T-cell (primary cell): ENCODE measurements at regions of chr1 and their contacts with region 1.

Region 1: GRCh38 chr1:29043274-29043965 is 80.3 kb downstream of the TMEM200B start:
- DNase-seq: no peak
- ATAC-seq: no peak
- H3K4me3 ChIP-seq: no peak overlapping the region
- H3K4me3 Mint-ChIP-seq: no peak overlapping the region
- H3K27ac ChIP-seq: no peak overlapping the region
- H3K27ac Mint-ChIP-seq: no peak overlapping the region
- H3K4me1 ChIP-seq: no peaks in the 10 kb centered on the region
- H3K4me1 Mint-ChIP-seq: no peaks in the 10 kb centered on the region
- H3K27me3 ChIP-seq: no peaks in the 10 kb centered on the region
- H3K27me3 Mint-ChIP-seq: no peaks in the 10 kb centered on the region

Region 2: GRCh38 chr1:28976248-28976647 is 67.2 kb before region 1 on chr1:
- CTCF ChIA-PET with region 1: no interaction called
- POLR2A ChIA-PET with region 1: no interaction called
- DNase-seq: no peak
- ATAC-seq: no peak
- H3K4me3 ChIP-seq: no peak overlapping the region
- H3K4me3 Mint-ChIP-seq: no peak overlapping the region
- H3K27ac ChIP-seq: no peak overlapping the region
- H3K27ac Mint-ChIP-seq: no peak overlapping the region
- H3K4me1 ChIP-seq: peaks cover 8 to 12% of the 10 kb centered on the region in 2 experiments
- H3K4me1 Mint-ChIP-seq: peaks cover 87 to 90% (median 87%) of the 10 kb centered on the region in 3 donors
- H3K27me3 ChIP-seq: no peaks in the 10 kb centered on the region
- H3K27me3 Mint-ChIP-seq: no peaks in the 10 kb centered on the region

Region 3: GRCh38 chr1:29062157-29062942 is 18.9 kb after region 1 on chr1:
- CTCF ChIA-PET with region 1: no interaction called
- POLR2A ChIA-PET with region 1: no interaction called
- DNase-seq: no peak
- ATAC-seq: no peak
- H3K4me3 ChIP-seq: no peak overlapping the region
- H3K4me3 Mint-ChIP-seq: no peak overlapping the region
- H3K27ac ChIP-seq: no peak overlapping the region
- H3K27ac Mint-ChIP-seq: peak overlapping the region; percentile 44 to 55
- H3K4me1 ChIP-seq: peaks cover 2% of the 10 kb centered on the region in 2 experiments
- H3K4me1 Mint-ChIP-seq: peaks cover 7 to 14% (median 11%) of the 10 kb centered on the region in 3 donors
- H3K27me3 ChIP-seq: no peaks in the 10 kb centered on the region
- H3K27me3 Mint-ChIP-seq: no peaks in the 10 kb centered on the region

Region 4: GRCh38 chr1:29190718-29191117 is 147.3 kb after region 1 on chr1:
- CTCF ChIA-PET with region 1: no interaction called
- POLR2A ChIA-PET with region 1: interaction called in 1 of 2 experiments, 10 read pairs
- DNase-seq: no peak
- ATAC-seq: no peak
- H3K4me3 ChIP-seq: no peak overlapping the region
- H3K4me3 Mint-ChIP-seq: no peak overlapping the region
- H3K27ac ChIP-seq: no peak overlapping the region
- H3K27ac Mint-ChIP-seq: no peak overlapping the region
- H3K4me1 ChIP-seq: no peaks in the 10 kb centered on the region
- H3K4me1 Mint-ChIP-seq: no peaks in the 10 kb centered on the region
- H3K27me3 ChIP-seq: no peaks in the 10 kb centered on the region
- H3K27me3 Mint-ChIP-seq: no peaks in the 10 kb centered on the region